Activated T-helper 1 cell treated with anti-CD3 and anti-CD28 coated beads, Interleukin-12 subunit alpha, Interleukin-12 subunit beta, Interleukin-2, Interleukin-4 antibody, amounts not matched to agents 30 ng/mL and 10 ng/mL and 1 ng/mL, durations not matched to agents 14 hours and 24 hours and 36 hours (primary cell): ENCODE measurements at regions of chr9 and their contacts with region 1.

Region 1: GRCh38 chr9:111975709-111976108 is 79.1 kb downstream of the UGCG start:
- DNase-seq: no peak
- H3K4me3 Mint-ChIP-seq: no peak overlapping the region
- H3K27ac Mint-ChIP-seq: no peak overlapping the region
- H3K4me1 Mint-ChIP-seq: no peaks in the 10 kb centered on the region
- H3K27me3 Mint-ChIP-seq: peaks cover 16% of the 10 kb centered on the region

Region 2: GRCh38 chr9:111759762-111760639 is 215.7 kb before region 1 on chr9:
- intact Hi-C with region 1: loop called (anchors 1 kb)
- DNase-seq: peak; percentile 39
- H3K4me3 Mint-ChIP-seq: no peak overlapping the region
- H3K27ac Mint-ChIP-seq: no peak overlapping the region
- H3K4me1 Mint-ChIP-seq: no peaks in the 10 kb centered on the region
- H3K27me3 Mint-ChIP-seq: peaks cover 2% of the 10 kb centered on the region

Region 3: GRCh38 chr9:112119225-112120029 is 143.7 kb after region 1 on chr9:
- intact Hi-C with region 1: no loop called
- DNase-seq: no peak
- H3K4me3 Mint-ChIP-seq: no peak overlapping the region
- H3K27ac Mint-ChIP-seq: no peak overlapping the region
- H3K4me1 Mint-ChIP-seq: peaks cover 11% of the 10 kb centered on the region
- H3K27me3 Mint-ChIP-seq: no peaks in the 10 kb centered on the region